AG04450 (cell line): ENCODE measurements at regions of chr18 and their contacts with region 1.

Region 1: GRCh38 chr18:49052891-49053644 is 102.3 kb upstream of the SMAD7 start:
- DNase-seq: peak; percentile 82
- H3K4me3 ChIP-seq: no peak overlapping the region
- H3K27ac ChIP-seq: peak overlapping the region; percentile 96
- H3K27me3 ChIP-seq: no peaks in the 10 kb centered on the region
- CTCF ChIP-seq: no peak

Region 2: DNA sequence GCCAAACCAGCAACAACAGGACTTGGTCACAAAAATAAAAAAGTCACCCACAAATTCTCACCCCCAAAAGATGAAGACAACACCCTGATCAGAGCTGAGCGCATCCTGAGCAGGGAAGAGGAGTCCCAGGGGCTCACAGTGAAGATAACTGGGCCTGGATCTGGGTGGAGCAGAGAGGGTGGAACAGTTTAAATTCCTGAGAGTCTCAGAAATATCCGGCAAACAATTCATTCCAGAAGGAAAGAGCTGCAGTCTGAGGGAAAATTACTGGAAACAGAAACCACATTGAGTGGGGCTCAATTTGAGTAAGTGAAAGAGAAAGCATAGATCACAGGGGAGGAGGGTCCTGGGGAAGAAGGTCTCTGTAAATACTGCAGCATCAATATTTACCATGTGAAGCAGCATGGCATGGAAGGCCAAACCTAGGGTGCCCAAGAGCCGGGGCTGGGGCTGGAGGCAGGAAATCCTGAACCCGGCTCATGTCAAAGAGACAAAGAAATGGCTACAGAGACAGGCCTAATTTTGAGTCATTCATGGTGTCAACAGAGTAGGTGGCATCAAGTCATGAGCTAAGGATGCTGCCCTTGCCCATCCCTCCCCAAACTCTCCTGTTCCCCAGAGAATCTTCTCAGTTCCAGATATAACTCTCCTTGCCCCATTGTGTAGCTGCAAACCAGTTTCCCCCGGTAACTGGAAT is 582.4 kb before region 1 on chr18:
- CTCF ChIA-PET with region 1: no interaction called
- POLR2A ChIA-PET with region 1: no interaction called
- DNase-seq: no peak
- H3K4me3 ChIP-seq: no peak overlapping the region
- H3K27ac ChIP-seq: no peak overlapping the region
- H3K27me3 ChIP-seq: peaks cover 17% of the 10 kb centered on the region
- CTCF ChIP-seq: no peak

Region 3: GRCh38 chr18:49041435-49042245 is 11.4 kb before region 1 on chr18:
- CTCF ChIA-PET with region 1: interaction called, 19 read pairs
- POLR2A ChIA-PET with region 1: no interaction called
- DNase-seq: peak; percentile 29
- H3K4me3 ChIP-seq: no peak overlapping the region
- H3K27ac ChIP-seq: no peak overlapping the region
- H3K27me3 ChIP-seq: no peaks in the 10 kb centered on the region
- CTCF ChIP-seq: peak; percentile 77